Activated T-helper 1 cell treated with anti-CD3 and anti-CD28 coated beads, Interleukin-12 subunit alpha, Interleukin-12 subunit beta, Interleukin-2, Interleukin-4 antibody, amounts not matched to agents 30 ng/mL and 10 ng/mL and 1 ng/mL, durations not matched to agents 14 hours and 24 hours and 36 hours (primary cell): ENCODE measurements at regions of chr10 and their contacts with region 1.

Region 1: DNA sequence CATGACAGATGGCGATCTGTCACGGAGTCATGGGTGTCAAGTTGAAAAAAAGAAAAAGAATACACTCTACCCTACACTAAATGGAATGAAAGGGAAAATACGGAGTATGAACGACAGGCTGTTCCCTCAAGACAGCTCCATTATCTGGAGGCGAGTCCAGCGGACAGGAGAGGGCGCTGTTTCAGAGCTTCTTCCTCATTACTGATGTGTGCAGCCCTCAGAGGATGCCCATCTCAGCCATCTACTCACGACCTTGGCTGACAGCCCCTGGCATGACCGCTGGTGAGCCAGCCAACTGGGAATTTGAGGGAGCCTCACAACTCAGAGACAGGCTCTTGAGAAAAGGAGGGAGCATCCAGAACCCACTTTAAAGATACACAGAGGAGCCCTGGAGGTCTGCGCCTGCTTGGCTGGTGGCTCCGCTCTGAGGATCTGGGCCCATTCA is 49.6 kb upstream of the SMNDC1 start:
- DNase-seq: peak; percentile 72
- H3K4me3 Mint-ChIP-seq: peak overlapping the region; percentile 82
- H3K27ac Mint-ChIP-seq: peak overlapping the region; percentile 97
- H3K4me1 Mint-ChIP-seq: peaks cover 82% of the 10 kb centered on the region
- H3K27me3 Mint-ChIP-seq: no peaks in the 10 kb centered on the region

Region 2: DNA sequence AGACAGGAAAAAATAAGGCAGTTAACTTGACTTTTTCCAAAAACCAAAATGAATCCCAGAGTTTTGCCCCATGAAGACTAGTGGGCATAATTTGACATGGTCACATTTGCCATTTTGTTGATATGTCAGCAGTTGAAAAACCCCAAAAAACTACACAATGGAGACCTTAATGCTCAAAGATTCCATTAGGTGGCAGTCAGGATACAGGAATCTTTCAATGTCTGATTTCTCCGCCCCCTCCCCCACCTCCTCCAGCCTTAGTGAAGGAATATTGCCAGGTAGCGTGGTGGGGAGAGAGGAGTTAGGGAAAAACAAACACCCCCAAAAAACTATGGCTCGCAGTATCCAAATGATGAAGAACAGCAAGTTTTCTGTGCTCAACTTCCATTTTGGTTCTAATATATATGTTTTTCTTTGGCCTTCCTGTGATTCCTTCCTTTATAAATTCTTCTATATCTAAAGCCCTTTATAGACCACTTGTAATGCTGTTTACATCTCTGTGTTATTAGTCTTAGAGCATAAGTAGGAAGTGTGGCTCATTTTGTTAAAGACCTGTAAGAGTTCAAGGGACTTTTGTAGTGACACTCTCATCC is 42.9 kb before region 1 on chr10:
- intact Hi-C with region 1: loop called (anchors 1 kb)
- DNase-seq: no peak
- H3K4me3 Mint-ChIP-seq: no peak overlapping the region
- H3K27ac Mint-ChIP-seq: no peak overlapping the region
- H3K4me1 Mint-ChIP-seq: peaks cover 51% of the 10 kb centered on the region
- H3K27me3 Mint-ChIP-seq: no peaks in the 10 kb centered on the region

Region 3: GRCh38 chr10:110387983-110388687 is 33.8 kb after region 1 on chr10:
- intact Hi-C with region 1: loop called (anchors 1 kb)
- DNase-seq: no peak
- H3K4me3 Mint-ChIP-seq: peak overlapping the region; percentile 49
- H3K27ac Mint-ChIP-seq: peak overlapping the region; percentile 96
- H3K4me1 Mint-ChIP-seq: peaks cover 59% of the 10 kb centered on the region
- H3K27me3 Mint-ChIP-seq: no peaks in the 10 kb centered on the region

Region 4: GRCh38 chr10:110425684-110426293 is 71.4 kb after region 1 on chr10:
- intact Hi-C with region 1: loop called (anchors 1 kb)
- DNase-seq: peak; percentile 53
- H3K4me3 Mint-ChIP-seq: peak overlapping the region; percentile 34
- H3K27ac Mint-ChIP-seq: peak overlapping the region; percentile 91
- H3K4me1 Mint-ChIP-seq: peaks cover 70% of the 10 kb centered on the region
- H3K27me3 Mint-ChIP-seq: no peaks in the 10 kb centered on the region

Region 5: GRCh38 chr10:110535958-110536891 is 181.9 kb after region 1 on chr10:
- intact Hi-C with region 1: loop called (anchors 1 kb)
- DNase-seq: peak; percentile 49
- H3K4me3 Mint-ChIP-seq: peak overlapping the region; percentile 48
- H3K27ac Mint-ChIP-seq: peak overlapping the region; percentile 89
- H3K4me1 Mint-ChIP-seq: peaks cover 60% of the 10 kb centered on the region
- H3K27me3 Mint-ChIP-seq: no peaks in the 10 kb centered on the region